B cell (primary cell): ENCODE measurements at regions of chr14 and their contacts with region 1.

Region 1: GRCh38 chr14:59189786-59190771 is 1.6 kb downstream of the DAAM1 start:
- DNase-seq: peak; percentile 86
- ATAC-seq: peak; percentile 10
- H3K4me3 ChIP-seq: peak overlapping the region; percentile 66 to 92 (median 83)
- H3K4me3 Mint-ChIP-seq: peak overlapping the region; percentile 93
- H3K27ac ChIP-seq: peak overlapping the region; percentile 82 to 91
- H3K27ac Mint-ChIP-seq: peak overlapping the region; percentile 96
- H3K4me1 ChIP-seq: peaks cover 14 to 19% of the 10 kb centered on the region in 2 donors
- H3K4me1 Mint-ChIP-seq: peaks cover 33% of the 10 kb centered on the region
- H3K27me3 ChIP-seq: peaks cover 0 to 9% (median 1%) of the 10 kb centered on the region in 4 experiments
- H3K27me3 Mint-ChIP-seq: peaks cover 5% of the 10 kb centered on the region
- CTCF ChIP-seq: no peak

Region 2: GRCh38 chr14:57390028-57390805 is 1799.9 kb before region 1 on chr14 and contains the start of gene NAA30:
- CTCF ChIA-PET with region 1: no interaction called
- POLR2A ChIA-PET with region 1: no interaction called
- intact Hi-C with region 1: loop called (anchors 10 kb)
- DNase-seq: peak; percentile 96
- ATAC-seq: peak; percentile 95
- H3K4me3 ChIP-seq: peak within 1 kb of the TSS; percentile 71 to 97 (median 81)
- H3K4me3 Mint-ChIP-seq: peak within 1 kb of the TSS; percentile 88
- H3K27ac ChIP-seq: peak within 1 kb of the TSS; percentile 82 to 89
- H3K27ac Mint-ChIP-seq: peak within 1 kb of the TSS; percentile 87
- H3K4me1 ChIP-seq: peaks cover 19 to 28% of the 10 kb centered on the region in 2 donors
- H3K4me1 Mint-ChIP-seq: peaks cover 42% of the 10 kb centered on the region
- H3K27me3 ChIP-seq: no peaks in the 10 kb centered on the region
- H3K27me3 Mint-ChIP-seq: peaks cover 2% of the 10 kb centered on the region
- CTCF ChIP-seq: no peak
- total RNA-seq, gene NAA30: 13.3 and 14.7 TPM in 2 replicates

Region 3: GRCh38 chr14:59126710-59127432 is 63.2 kb before region 1 on chr14:
- CTCF ChIA-PET with region 1: interaction called, 3 read pairs
- POLR2A ChIA-PET with region 1: no interaction called
- intact Hi-C with region 1: loop called (anchors 1 kb)
- DNase-seq: peak; percentile 73
- ATAC-seq: peak; percentile 80
- H3K4me3 ChIP-seq: no peak overlapping the region
- H3K4me3 Mint-ChIP-seq: no peak overlapping the region
- H3K27ac ChIP-seq: no peak overlapping the region
- H3K27ac Mint-ChIP-seq: no peak overlapping the region
- H3K4me1 ChIP-seq: no peaks in the 10 kb centered on the region
- H3K4me1 Mint-ChIP-seq: peaks cover 3% of the 10 kb centered on the region
- H3K27me3 ChIP-seq: peaks cover 0 to 4% (median 1%) of the 10 kb centered on the region in 4 experiments
- H3K27me3 Mint-ChIP-seq: peaks cover 8% of the 10 kb centered on the region
- CTCF ChIP-seq: peak; percentile 94

Region 4: GRCh38 chr14:59275653-59276052 is 85.6 kb after region 1 on chr14:
- CTCF ChIA-PET with region 1: interaction called, 3 read pairs
- POLR2A ChIA-PET with region 1: no interaction called
- intact Hi-C with region 1: loop called (anchors 1 kb)
- DNase-seq: no peak
- ATAC-seq: peak; percentile 64
- H3K4me3 ChIP-seq: no peak overlapping the region
- H3K4me3 Mint-ChIP-seq: peak overlapping the region; percentile 40
- H3K27ac ChIP-seq: no peak overlapping the region
- H3K27ac Mint-ChIP-seq: peak overlapping the region; percentile 1
- H3K4me1 ChIP-seq: peaks cover 9 to 16% of the 10 kb centered on the region in 2 donors
- H3K4me1 Mint-ChIP-seq: peaks cover 26% of the 10 kb centered on the region
- H3K27me3 ChIP-seq: no peaks in the 10 kb centered on the region
- H3K27me3 Mint-ChIP-seq: no peaks in the 10 kb centered on the region
- CTCF ChIP-seq: no peak

Region 5: GRCh38 chr14:59356767-59357166 is 166.7 kb after region 1 on chr14:
- CTCF ChIA-PET with region 1: no interaction called
- POLR2A ChIA-PET with region 1: no interaction called
- intact Hi-C with region 1: loop called (anchors 2 kb)
- DNase-seq: peak; percentile 69
- ATAC-seq: peak; percentile 76
- H3K4me3 ChIP-seq: peak overlapping the region in 1 of 5 experiments; percentile 30
- H3K4me3 Mint-ChIP-seq: peak overlapping the region; percentile 73
- H3K27ac ChIP-seq: peak overlapping the region; percentile 2 to 20
- H3K27ac Mint-ChIP-seq: peak overlapping the region; percentile 79
- H3K4me1 ChIP-seq: peaks cover 53 to 70% of the 10 kb centered on the region in 2 donors
- H3K4me1 Mint-ChIP-seq: peaks cover 80% of the 10 kb centered on the region
- H3K27me3 ChIP-seq: no peaks in the 10 kb centered on the region
- H3K27me3 Mint-ChIP-seq: no peaks in the 10 kb centered on the region
- CTCF ChIP-seq: no peak

Region 6: DNA sequence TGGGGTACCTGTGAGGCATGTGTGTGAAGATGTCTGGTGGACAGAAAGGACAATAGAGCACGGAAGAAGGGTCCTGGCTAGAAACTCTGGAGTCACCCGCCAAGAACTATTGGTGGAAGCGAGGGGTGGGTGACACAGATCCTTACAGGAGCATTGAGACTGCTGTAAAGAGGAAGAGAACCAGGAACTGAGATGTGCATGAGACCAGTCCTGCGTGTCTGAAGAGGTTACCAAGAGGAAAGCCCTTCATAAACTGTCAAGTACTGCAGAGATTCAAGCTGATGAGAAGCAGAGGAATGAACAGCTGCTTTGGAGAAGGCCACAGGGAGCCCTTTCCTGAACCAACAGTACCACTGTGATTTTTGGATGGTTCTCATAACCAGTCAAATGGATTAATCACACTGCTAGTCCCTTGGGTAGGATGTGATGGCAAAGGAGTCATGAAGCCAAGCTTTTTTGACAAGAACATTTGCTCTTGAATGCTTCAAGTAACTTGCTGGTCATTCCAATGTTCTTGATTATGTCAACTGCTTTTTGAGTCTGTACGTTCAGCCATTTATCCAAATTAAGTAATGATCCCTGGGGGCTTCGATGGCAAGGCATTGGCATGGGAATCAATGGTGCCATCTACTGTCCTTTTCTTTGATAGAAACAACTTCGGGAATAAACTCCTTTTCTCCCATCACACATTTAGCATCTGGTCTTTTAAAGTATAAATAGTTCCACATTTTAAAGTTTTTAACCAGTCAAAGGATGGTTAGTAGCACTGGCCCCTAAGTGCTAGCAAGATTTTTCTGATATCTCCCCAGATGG is 232.2 kb after region 1 on chr14:
- CTCF ChIA-PET with region 1: no interaction called
- POLR2A ChIA-PET with region 1: no interaction called
- intact Hi-C with region 1: no loop called
- DNase-seq: peak; percentile 37
- ATAC-seq: peak; percentile 17
- H3K4me3 ChIP-seq: no peak overlapping the region
- H3K4me3 Mint-ChIP-seq: no peak overlapping the region
- H3K27ac ChIP-seq: no peak overlapping the region
- H3K27ac Mint-ChIP-seq: peak overlapping the region; percentile 43
- H3K4me1 ChIP-seq: peaks cover 12 to 16% of the 10 kb centered on the region in 2 donors
- H3K4me1 Mint-ChIP-seq: peaks cover 26% of the 10 kb centered on the region
- H3K27me3 ChIP-seq: no peaks in the 10 kb centered on the region
- H3K27me3 Mint-ChIP-seq: peaks cover 7% of the 10 kb centered on the region
- CTCF ChIP-seq: no peak

Region 7: GRCh38 chr14:59464486-59465315 is 274.6 kb after region 1 on chr14:
- CTCF ChIA-PET with region 1: interaction called, 3 read pairs
- POLR2A ChIA-PET with region 1: no interaction called
- intact Hi-C with region 1: loop called (anchors 1 kb)
- DNase-seq: peak; percentile 77
- ATAC-seq: peak; percentile 76
- H3K4me3 ChIP-seq: peak overlapping the region in 4 of 5 experiments; percentile 37 to 70 (median 60)
- H3K4me3 Mint-ChIP-seq: peak overlapping the region; percentile 94
- H3K27ac ChIP-seq: no peak overlapping the region
- H3K27ac Mint-ChIP-seq: peak overlapping the region; percentile 89
- H3K4me1 ChIP-seq: peaks cover 12% of the 10 kb centered on the region in 2 donors
- H3K4me1 Mint-ChIP-seq: peaks cover 18% of the 10 kb centered on the region
- H3K27me3 ChIP-seq: peaks cover 0 to 6% (median 6%) of the 10 kb centered on the region in 4 experiments
- H3K27me3 Mint-ChIP-seq: no peaks in the 10 kb centered on the region
- CTCF ChIP-seq: no peak

Region 8: GRCh38 chr14:60331201-60332045 is 1141.3 kb after region 1 on chr14:
- CTCF ChIA-PET with region 1: no interaction called
- POLR2A ChIA-PET with region 1: no interaction called
- intact Hi-C with region 1: loop called (anchors 2 kb)
- DNase-seq: peak; percentile 85
- ATAC-seq: peak; percentile 66
- H3K4me3 ChIP-seq: peak overlapping the region; percentile 49 to 87 (median 73)
- H3K4me3 Mint-ChIP-seq: peak overlapping the region; percentile 90
- H3K27ac ChIP-seq: peak overlapping the region; percentile 63 to 68
- H3K27ac Mint-ChIP-seq: peak overlapping the region; percentile 71
- H3K4me1 ChIP-seq: peaks cover 16 to 20% of the 10 kb centered on the region in 2 donors
- H3K4me1 Mint-ChIP-seq: peaks cover 26% of the 10 kb centered on the region
- H3K27me3 ChIP-seq: peaks cover 0 to 17% (median 4%) of the 10 kb centered on the region in 4 experiments
- H3K27me3 Mint-ChIP-seq: peaks cover 23% of the 10 kb centered on the region
- CTCF ChIP-seq: peak; percentile 98